Mucosa of descending colon (tissue), 3 donors: ENCODE measurements at regions of chrX and their contacts with region 1.

Region 1: DNA sequence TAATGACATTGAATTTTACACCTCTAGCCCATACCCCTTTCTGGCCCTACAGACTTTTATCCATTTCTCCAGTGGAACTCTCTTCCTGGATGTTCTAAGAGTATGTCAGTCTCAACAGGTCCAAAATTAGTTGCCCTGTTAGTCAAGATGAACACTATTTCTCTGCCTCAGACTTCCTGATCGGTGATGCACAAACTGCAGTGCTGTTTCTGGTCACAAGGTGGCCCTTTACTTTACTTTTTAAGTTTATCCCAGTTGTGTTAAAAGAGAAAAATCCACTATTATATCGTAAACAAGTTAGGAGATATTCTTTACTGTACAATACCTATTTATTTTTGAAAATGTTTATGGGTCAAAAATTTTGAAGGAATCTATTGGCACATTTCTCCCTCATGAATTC is 13.1 kb downstream of the TCEAL7 start:
- DNase-seq: peak in 1 of 3 donors; percentile 70
- ATAC-seq: peak; percentile 54
- H3K4me3 ChIP-seq: no peak overlapping the region
- H3K4me1 ChIP-seq: no peaks in the 10 kb centered on the region
- CTCF ChIP-seq: peak; percentile 31

Region 2: DNA sequence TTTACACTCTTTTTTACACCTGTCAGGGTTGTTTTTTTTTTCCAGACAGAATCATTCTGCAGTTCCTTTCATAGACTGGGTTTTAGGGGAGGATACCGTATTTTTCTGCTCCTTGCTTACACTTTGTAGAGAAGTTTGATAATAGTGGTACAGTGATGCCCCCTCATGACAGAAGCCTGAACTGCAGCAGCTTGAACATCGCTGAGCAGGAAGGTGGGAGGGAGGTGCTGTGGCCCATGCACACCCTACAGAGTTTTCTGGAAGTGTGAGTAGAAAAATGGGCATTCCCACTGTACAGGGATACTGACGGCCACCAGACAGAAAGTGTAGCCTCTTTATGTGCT is 121.6 kb after region 1 on chrX:
- intact Hi-C with region 1: loop called (anchors 5 to 10 kb)
- DNase-seq: peak in 2 of 3 donors; percentile 70 to 86
- ATAC-seq: peak; percentile 93
- H3K4me3 ChIP-seq: no peak overlapping the region
- H3K4me1 ChIP-seq: no peaks in the 10 kb centered on the region
- CTCF ChIP-seq: peak; percentile 39